ENCODE measurements at regions of chr15 and their contacts with region 1.

Region 1: DNA sequence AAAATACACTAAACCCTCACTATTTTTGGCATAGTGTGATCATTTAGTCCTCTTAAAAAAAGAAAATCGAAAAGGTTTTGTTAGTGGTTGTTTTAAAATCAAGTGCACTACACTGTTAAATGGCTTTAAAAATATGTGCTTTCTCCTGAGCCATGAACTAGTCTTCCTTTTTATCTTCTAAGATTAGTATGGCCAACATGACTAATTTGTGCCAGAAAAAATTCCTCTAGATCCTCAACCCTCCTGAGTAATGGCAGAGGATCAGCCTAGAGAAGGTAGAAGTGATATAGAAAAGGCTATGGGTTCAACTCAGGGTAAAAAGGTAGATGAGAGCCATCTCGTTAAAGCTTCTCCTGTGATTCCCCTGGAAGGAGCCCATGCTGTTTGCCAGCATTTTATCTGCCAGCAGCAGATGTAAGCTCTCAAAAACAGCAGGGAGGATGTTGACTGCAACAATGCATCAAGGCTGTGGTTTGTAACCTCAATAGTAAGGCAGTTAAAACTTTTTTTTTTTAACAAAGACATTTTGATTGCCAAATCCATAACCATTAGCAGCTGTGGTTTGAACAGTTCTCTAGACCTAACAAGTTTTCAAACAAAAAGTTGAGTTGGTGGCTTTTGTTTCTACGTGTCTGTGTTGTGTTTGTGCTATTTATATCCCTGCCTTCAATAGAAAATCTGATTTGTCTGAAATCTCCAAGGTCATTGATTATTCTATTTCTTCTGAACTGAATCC is 30.2 kb upstream of the ZNF609 start:
- DNase-seq: no peak
- H3K4me3 ChIP-seq: no peak overlapping the region
- H3K4me3 Mint-ChIP-seq: no peak overlapping the region
- H3K27ac Mint-ChIP-seq: no peak overlapping the region
- H3K4me1 ChIP-seq: no peaks in the 10 kb centered on the region
- H3K4me1 Mint-ChIP-seq: no peaks in the 10 kb centered on the region
- H3K27me3 ChIP-seq: no peaks in the 10 kb centered on the region
- H3K27me3 Mint-ChIP-seq: no peaks in the 10 kb centered on the region
- CTCF ChIP-seq: no peak

Region 2: DNA sequence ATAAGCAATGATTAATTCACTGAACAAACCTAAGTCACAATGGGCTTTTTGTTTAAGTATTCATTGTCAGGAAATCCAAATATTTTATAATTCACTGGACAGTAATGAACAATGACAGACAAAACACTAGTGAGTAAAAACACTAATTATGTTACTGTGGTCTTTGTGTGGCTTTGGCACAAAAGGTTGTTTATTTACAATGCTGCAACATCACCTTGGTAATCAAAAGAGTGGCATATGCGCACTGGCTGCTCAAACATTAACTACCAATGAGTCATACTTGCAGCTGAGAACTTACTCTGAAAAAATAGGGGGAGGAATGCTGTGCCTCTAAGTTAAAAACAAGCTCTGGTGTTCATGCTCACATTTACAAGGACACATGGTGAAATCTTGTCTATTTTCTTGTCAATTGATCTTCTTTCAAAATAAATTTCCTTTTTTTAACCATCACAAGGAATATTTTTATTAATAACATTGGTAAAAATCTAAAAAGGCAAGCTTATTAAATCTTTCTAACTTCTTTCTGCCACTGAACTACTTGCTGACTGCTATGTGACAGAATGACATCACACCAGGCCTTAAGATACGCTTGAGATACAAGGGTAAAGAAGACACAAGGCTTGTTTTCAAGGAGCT is 182.1 kb before region 1 on chr15:
- CTCF ChIA-PET with region 1: no interaction called
- POLR2A ChIA-PET with region 1: interaction called, 13 read pairs
- intact Hi-C with region 1: no loop called
- DNase-seq: peak; percentile 51 to 65
- H3K4me3 ChIP-seq: no peak overlapping the region
- H3K4me3 Mint-ChIP-seq: no peak overlapping the region
- H3K27ac Mint-ChIP-seq: peak overlapping the region; percentile 90
- H3K4me1 ChIP-seq: peaks cover 39% of the 10 kb centered on the region
- H3K4me1 Mint-ChIP-seq: peaks cover 40% of the 10 kb centered on the region
- H3K27me3 ChIP-seq: no peaks in the 10 kb centered on the region
- H3K27me3 Mint-ChIP-seq: no peaks in the 10 kb centered on the region
- CTCF ChIP-seq: no peak

Region 3: GRCh38 chr15:64681424-64682024 is 251.4 kb after region 1 on chr15:
- CTCF ChIA-PET with region 1: no interaction called
- POLR2A ChIA-PET with region 1: no interaction called
- intact Hi-C with region 1: loop called (anchors 1 kb)
- DNase-seq: peak; percentile 69 to 75
- H3K4me3 ChIP-seq: no peak overlapping the region
- H3K4me3 Mint-ChIP-seq: no peak overlapping the region
- H3K27ac Mint-ChIP-seq: no peak overlapping the region
- H3K4me1 ChIP-seq: no peaks in the 10 kb centered on the region
- H3K4me1 Mint-ChIP-seq: no peaks in the 10 kb centered on the region
- H3K27me3 ChIP-seq: no peaks in the 10 kb centered on the region
- H3K27me3 Mint-ChIP-seq: no peaks in the 10 kb centered on the region
- CTCF ChIP-seq: peak; percentile 87 to 89